Psoas muscle (tissue), 8 donors: ENCODE measurements at regions of chr7 and their contacts with region 1.

Region 1: GRCh38 chr7:27160546-27161213 is 4.2 kb upstream of the HOXA7 start:
- DNase-seq: peak; percentile 83 to 93
- ATAC-seq: peak; percentile 64 to 77 (median 70)
- H3K4me3 ChIP-seq: peak overlapping the region; percentile 79
- H3K27ac ChIP-seq: peak overlapping the region; percentile 86
- H3K4me1 ChIP-seq: peaks cover 19% of the 10 kb centered on the region
- H3K27me3 ChIP-seq: no peaks in the 10 kb centered on the region
- CTCF ChIP-seq: peak; percentile 100

Region 2: DNA sequence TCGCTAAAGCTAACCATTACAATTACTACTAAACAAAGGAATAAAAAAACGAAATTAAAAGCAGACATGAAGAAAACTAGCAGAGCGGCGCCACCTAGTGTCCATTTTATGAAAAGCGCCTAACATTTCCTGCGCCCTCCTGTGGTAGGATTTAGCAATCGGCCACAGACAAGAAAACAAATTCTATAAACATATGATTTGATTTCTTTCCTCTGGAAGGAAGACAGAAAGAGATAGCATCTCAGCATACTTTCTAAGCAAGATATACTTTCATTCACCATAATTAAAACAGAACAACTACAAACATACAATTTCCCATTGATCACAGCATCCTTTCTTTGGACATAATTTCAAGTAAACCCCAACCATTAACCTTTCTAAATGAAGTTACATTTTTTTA is 1594.7 kb before region 1 on chr7:
- intact Hi-C with region 1: loop called in 1 of 2 experiments (anchors 10 kb)
- DNase-seq: peak; percentile 17 to 64
- ATAC-seq: peak in 3 of 4 donors; percentile 64 to 80 (median 70)
- H3K4me3 ChIP-seq: peak overlapping the region; percentile 22
- H3K27ac ChIP-seq: no peak overlapping the region
- H3K4me1 ChIP-seq: peaks cover 18% of the 10 kb centered on the region
- H3K27me3 ChIP-seq: no peaks in the 10 kb centered on the region
- CTCF ChIP-seq: peak; percentile 100

Region 3: GRCh38 chr7:26090927-26091519 is 1069.7 kb before region 1 on chr7:
- intact Hi-C with region 1: loop called in 1 of 2 experiments (anchors 5 kb)
- DNase-seq: no peak
- ATAC-seq: peak in 2 of 4 donors; percentile 57 to 82
- H3K4me3 ChIP-seq: no peak overlapping the region
- H3K27ac ChIP-seq: no peak overlapping the region
- H3K4me1 ChIP-seq: no peaks in the 10 kb centered on the region
- H3K27me3 ChIP-seq: no peaks in the 10 kb centered on the region
- CTCF ChIP-seq: peak; percentile 73

Region 4: DNA sequence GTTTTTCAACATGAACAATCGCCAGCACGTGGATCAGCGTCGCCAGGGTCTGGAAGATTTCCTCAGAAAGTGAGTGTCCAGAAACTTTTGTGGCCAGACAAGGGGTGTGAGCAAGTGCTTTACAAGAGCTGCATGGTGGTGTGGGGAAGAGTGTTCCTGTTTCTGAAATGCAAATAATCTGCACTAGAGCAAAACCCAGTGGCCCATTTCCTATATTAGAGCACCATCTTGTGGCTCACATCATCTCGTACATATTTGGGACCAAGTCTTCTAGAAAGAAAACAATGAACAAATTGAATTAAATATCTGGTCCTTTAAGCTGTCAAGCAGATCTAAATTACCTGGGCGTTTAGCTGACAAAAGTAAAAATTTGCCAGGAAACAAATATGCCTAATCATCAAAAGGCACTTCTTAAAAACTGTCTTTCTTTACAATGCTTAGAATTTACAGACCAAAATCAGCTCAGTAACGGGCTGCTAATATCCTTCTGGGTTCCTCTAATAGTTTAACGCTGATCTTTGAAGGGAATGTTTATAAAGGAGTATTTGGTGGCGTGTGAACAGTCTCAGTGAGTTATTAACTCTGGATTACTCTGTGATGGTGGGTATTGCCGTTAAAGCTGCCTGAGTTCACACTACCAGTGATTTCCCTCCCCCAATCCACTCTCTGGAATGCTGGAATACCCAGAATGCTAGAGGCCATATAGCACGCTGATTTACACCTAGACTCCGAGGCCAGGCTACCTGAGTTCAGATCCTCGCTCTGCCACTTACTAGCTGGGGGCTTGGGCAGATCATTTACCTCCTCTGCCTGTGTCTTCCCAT is 795.4 kb before region 1 on chr7:
- intact Hi-C with region 1: loop called (anchors 2 kb)
- DNase-seq: no peak
- ATAC-seq: peak; percentile 78 to 96 (median 88)
- H3K4me3 ChIP-seq: no peak overlapping the region
- H3K27ac ChIP-seq: no peak overlapping the region
- H3K4me1 ChIP-seq: no peaks in the 10 kb centered on the region
- H3K27me3 ChIP-seq: peaks cover 0 to 5% (median 5%) of the 10 kb centered on the region in 3 donors
- CTCF ChIP-seq: peak; percentile 80

Region 5: DNA sequence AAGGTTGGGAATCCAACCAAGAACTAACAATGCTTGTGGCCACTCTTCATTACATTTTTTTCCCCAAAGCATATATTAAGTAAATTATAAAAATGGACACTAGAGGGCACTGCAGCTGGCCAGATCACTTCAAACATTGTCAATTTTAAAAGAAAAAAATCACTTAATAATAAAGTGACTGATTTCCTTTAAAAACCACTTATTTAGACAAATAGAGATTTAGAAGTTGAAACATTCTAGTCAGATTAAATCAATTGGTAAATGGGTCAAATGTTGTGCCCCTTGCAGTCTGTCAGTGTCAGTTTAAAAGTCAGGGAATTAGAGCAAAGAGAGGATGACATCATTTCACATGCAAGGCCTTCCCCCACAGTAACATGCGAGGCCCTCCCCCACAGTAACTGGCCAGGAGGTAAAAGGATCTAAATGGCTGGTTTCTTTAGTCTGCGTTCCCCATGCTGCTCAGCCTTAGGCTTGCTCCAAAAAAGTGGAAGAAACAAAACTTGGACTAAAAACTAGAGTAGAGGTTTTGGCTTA is 474.2 kb before region 1 on chr7:
- intact Hi-C with region 1: loop called (anchors 2 kb)
- DNase-seq: peak; percentile 19 to 48
- ATAC-seq: peak in 2 of 4 donors; percentile 45 to 69
- H3K4me3 ChIP-seq: no peak overlapping the region
- H3K27ac ChIP-seq: no peak overlapping the region
- H3K4me1 ChIP-seq: peaks cover 6% of the 10 kb centered on the region
- H3K27me3 ChIP-seq: no peaks in the 10 kb centered on the region
- CTCF ChIP-seq: peak; percentile 76